Activated CD8-positive, alpha-beta T cell treated with anti-CD3 and anti-CD28 coated beads, Interleukin-2, amount 10 ng/mL, durations not matched to agents 7 days and 5 days (primary cell): ENCODE measurements at regions of chr18 and their contacts with region 1.

Region 1: GRCh38 chr18:48777026-48777743 is 173.6 kb downstream of the SMAD7 start:
- DNase-seq: peak; percentile 75
- ATAC-seq: peak; percentile 81
- H3K4me3 Mint-ChIP-seq: no peak overlapping the region
- H3K27ac Mint-ChIP-seq: peak overlapping the region; percentile 30
- H3K4me1 Mint-ChIP-seq: peaks cover 16% of the 10 kb centered on the region
- H3K27me3 Mint-ChIP-seq: no peaks in the 10 kb centered on the region

Region 2: DNA sequence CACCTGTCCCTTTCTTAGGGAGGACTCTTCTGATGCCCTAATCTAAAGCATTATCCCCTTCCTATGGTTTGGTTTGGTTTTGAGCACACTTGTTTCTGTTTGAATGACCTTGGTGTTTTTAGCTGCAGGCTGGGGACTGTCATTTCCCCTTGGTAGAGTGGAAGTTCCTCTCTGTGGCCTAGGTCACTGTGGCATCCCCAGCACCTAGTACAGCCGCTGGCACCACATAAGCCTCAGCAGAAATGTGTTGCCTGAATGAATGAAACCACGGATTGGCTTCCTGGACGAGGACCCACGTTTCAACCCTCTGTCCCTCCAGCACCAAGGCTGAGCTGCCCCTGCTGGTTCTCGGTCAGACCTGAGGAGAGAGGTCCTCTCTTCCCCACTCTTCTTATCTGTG is 78.5 kb before region 1 on chr18:
- CTCF ChIA-PET with region 1: no interaction called
- POLR2A ChIA-PET with region 1: no interaction called
- DNase-seq: peak; percentile 53
- ATAC-seq: peak; percentile 63
- H3K4me3 Mint-ChIP-seq: no peak overlapping the region
- H3K27ac Mint-ChIP-seq: peak overlapping the region; percentile 63
- H3K4me1 Mint-ChIP-seq: peaks cover 54% of the 10 kb centered on the region
- H3K27me3 Mint-ChIP-seq: peaks cover 2% of the 10 kb centered on the region

Region 3: DNA sequence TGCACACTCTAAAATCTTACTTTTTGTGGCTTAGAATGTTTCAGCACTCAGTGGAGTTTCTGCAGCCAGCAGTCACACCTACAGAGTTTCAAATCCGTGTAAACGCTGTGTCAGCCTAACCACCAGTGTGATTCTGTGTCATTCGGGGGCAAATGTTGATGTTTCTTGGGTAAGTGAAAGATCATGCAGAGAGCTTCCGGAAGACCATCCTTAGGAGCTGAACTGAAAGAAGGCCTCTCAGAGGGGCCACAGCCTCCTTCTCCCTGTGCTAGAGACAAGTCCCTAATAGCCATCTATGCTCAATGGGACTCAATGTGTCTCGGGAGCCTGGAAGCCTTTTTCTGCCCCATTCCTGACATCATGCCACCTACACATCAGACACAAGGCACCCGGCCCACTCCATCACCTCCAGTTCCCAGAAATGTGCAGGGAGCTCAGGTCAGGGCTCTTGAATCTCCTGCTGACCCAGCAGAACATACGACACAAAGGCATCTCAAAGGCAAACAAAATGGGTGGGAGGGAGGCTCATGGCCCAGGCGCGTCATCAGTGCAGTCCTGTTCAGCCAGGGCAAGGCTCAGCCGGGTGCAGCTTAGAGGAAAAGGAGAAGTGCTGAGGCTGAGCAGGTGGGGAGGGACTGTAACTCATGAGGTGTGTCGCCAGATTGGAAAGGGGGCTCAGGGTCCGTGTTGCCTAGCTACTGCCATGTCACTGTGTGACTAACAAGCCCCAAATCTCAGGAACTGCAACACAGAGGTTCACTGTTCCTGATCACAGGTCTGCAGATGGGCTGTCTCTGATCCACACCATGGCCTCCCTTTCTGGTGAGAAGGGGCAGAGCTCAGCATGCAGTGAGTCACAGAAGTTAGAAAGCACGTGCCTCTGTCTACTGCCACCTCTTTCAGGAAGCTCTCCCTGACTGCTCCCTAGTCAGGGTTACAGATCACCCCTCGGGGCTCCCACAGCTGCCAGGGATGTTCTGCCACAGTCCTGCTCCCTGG is 91.6 kb after region 1 on chr18:
- CTCF ChIA-PET with region 1: interaction called, 12 read pairs
- POLR2A ChIA-PET with region 1: no interaction called
- DNase-seq: peak; percentile 67
- ATAC-seq: peak; percentile 69
- H3K4me3 Mint-ChIP-seq: no peak overlapping the region
- H3K27ac Mint-ChIP-seq: peak overlapping the region; percentile 73
- H3K4me1 Mint-ChIP-seq: peaks cover 29% of the 10 kb centered on the region
- H3K27me3 Mint-ChIP-seq: no peaks in the 10 kb centered on the region

Region 4: DNA sequence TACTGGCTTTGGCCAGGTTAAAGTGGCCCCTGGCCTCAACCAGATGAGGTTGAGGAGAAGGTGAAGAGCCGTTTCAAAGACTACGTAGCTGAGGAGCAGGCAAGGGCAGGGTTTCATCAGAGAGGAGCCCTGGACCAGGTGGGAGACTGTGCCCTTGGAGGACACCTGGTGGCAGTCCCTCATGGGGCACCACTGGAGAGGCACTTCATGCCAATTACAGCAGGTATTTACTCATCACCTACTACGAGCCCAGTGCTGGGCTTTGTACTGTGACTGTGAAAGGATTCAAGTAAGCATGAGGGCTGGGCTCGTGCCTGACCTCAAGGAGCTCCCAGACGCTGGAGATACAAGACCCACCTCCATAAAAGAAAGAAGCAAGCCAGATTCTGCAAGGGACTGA is 136.0 kb after region 1 on chr18:
- CTCF ChIA-PET with region 1: interaction called, 35 read pairs
- POLR2A ChIA-PET with region 1: interaction called, 5 read pairs
- DNase-seq: peak; percentile 64
- ATAC-seq: peak; percentile 63
- H3K4me3 Mint-ChIP-seq: no peak overlapping the region
- H3K27ac Mint-ChIP-seq: no peak overlapping the region
- H3K4me1 Mint-ChIP-seq: peaks cover 56% of the 10 kb centered on the region
- H3K27me3 Mint-ChIP-seq: no peaks in the 10 kb centered on the region

Region 5: GRCh38 chr18:48922801-48923730 is 145.9 kb after region 1 on chr18:
- CTCF ChIA-PET with region 1: interaction called, 18 read pairs
- POLR2A ChIA-PET with region 1: no interaction called
- DNase-seq: no peak
- ATAC-seq: peak; percentile 17
- H3K4me3 Mint-ChIP-seq: peak overlapping the region; percentile 66
- H3K27ac Mint-ChIP-seq: peak overlapping the region; percentile 93
- H3K4me1 Mint-ChIP-seq: peaks cover 78% of the 10 kb centered on the region
- H3K27me3 Mint-ChIP-seq: no peaks in the 10 kb centered on the region

Region 6: GRCh38 chr18:48951448-48952286 is 174.5 kb after region 1 on chr18:
- CTCF ChIA-PET with region 1: interaction called, 17 read pairs
- POLR2A ChIA-PET with region 1: no interaction called
- DNase-seq: peak; percentile 83
- ATAC-seq: peak; percentile 57
- H3K4me3 Mint-ChIP-seq: peak overlapping the region; percentile 94
- H3K27ac Mint-ChIP-seq: peak overlapping the region; percentile 81
- H3K4me1 Mint-ChIP-seq: peaks cover 39% of the 10 kb centered on the region
- H3K27me3 Mint-ChIP-seq: peaks cover 5% of the 10 kb centered on the region